Posterior cingulate gyrus (tissue), 11 donors: ENCODE measurements at regions of chr3 and their contacts with region 1.

Region 1: DNA sequence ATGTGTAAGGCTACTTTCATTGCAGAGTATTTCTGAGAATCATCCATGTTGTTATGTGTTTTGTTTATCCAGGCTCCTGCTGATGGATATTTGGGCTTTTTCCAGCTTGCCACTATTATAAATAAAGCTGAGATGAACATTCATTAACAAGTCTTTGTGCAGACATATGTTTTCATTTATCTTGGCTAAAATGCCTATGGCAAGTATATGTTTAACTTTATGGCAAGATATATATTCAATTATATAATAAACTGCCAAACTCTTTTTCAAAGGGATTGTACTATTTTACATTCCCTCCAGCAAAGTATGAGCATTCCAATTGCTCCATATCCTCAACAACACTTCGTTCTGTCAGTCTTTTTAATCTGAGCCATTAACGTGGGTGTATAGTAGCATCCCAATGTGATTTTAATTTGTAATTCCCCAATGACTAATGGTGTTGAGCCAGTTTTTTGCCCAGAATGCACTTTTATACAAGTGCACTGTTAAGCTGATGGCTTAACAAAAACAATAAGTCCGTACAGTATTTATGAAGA is 452.4 kb downstream of the SHQ1 start:
- DNase-seq: no peak

Region 2: GRCh38 chr3:72439321-72440183 is 43.7 kb after region 1 on chr3:
- intact Hi-C with region 1: loop called (anchors 5 kb)
- DNase-seq: no peak